ENCODE measurements at regions of chr4 and their contacts with region 1.

Region 1: DNA sequence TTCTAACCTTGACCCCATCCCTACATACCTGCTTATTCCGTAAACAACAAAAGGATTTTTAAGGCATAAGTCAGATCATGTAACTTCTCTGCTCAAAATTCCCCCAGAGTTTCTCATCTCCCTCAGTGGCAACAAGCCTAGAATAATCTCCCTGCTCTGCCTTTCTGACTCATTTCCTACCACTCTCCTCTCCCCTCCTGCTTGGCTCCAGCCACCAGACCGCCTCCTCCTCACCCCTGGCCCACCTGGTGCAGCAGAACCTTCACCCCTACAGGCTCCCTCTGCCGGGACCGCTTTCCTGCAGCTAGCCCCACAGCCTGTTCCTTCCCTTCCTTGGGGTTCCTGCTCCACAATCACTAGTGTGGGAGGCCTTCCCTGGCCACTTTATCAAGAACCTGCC is 32.1 kb downstream of the TSPAN5 start:
- DNase-seq: no peak
- ATAC-seq: no peak
- H3K4me3 ChIP-seq: no peak overlapping the region
- H3K4me3 Mint-ChIP-seq: no peak overlapping the region
- H3K27ac ChIP-seq: no peak overlapping the region
- H3K27ac Mint-ChIP-seq: no peak overlapping the region
- H3K4me1 ChIP-seq: peaks cover 17% of the 10 kb centered on the region
- H3K4me1 Mint-ChIP-seq: peaks cover 48% of the 10 kb centered on the region
- H3K27me3 ChIP-seq: no peaks in the 10 kb centered on the region
- H3K27me3 Mint-ChIP-seq: no peaks in the 10 kb centered on the region
- CTCF ChIP-seq: no peak

Region 2: DNA sequence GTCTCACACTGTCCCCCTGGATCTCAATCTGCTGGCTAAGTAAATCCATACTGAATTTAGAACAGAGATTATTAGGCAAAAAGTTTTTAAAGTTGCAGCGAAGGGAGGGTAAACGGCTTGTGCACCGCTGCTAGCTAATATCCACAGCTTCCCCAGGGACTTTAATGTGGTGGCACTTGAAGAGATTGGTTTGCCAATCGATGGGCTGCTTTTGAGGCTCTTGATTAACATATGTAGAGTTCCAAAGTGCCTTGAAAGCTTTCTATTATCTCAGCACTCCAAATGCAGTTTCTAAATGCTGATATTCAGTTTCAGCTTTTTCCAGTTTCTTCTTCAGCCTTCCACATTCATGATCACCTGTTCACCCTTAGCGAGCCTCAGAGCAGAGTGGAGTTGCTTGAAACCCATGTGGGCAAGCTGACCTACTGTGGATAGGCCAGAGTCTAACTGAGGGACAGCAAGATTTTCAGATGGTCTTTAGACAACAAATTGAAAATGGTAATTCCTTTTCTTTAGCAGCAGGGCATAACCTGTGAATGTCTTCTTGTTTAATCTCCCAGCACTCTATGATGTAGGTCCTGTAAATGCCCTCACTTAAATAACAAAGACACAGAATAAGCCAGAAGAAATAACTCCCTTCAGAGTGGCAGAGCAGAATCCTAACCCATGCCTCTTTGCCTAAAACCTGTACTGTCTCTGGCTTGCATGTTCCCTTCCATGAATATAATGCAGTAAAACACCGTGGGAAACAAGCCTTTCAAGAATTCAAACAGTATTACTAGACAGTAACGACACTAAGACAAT is 67.8 kb before region 1 on chr4:
- CTCF ChIA-PET with region 1: no interaction called
- POLR2A ChIA-PET with region 1: no interaction called
- intact Hi-C with region 1: loop called in 1 of 2 experiments (anchors 2 kb)
- DNase-seq: no peak
- ATAC-seq: no peak
- H3K4me3 ChIP-seq: no peak overlapping the region
- H3K4me3 Mint-ChIP-seq: no peak overlapping the region
- H3K27ac ChIP-seq: no peak overlapping the region
- H3K27ac Mint-ChIP-seq: no peak overlapping the region
- H3K4me1 ChIP-seq: no peaks in the 10 kb centered on the region
- H3K4me1 Mint-ChIP-seq: peaks cover 6% of the 10 kb centered on the region
- H3K27me3 ChIP-seq: no peaks in the 10 kb centered on the region
- H3K27me3 Mint-ChIP-seq: no peaks in the 10 kb centered on the region
- CTCF ChIP-seq: no peak

Measured in CD8-positive, alpha-beta T cell (primary cell).